ENCODE measurements at regions of chr1 and their contacts with region 1.

Region 1: GRCh38 chr1:101025657-101026504 is at the start of gene DPH5:
- DNase-seq: peak; percentile 88 to 93
- ATAC-seq: peak; percentile 95 to 100 (median 98)
- H3K4me3 ChIP-seq: peak within 1 kb of the TSS; percentile 48 to 85 (median 71)
- H3K27ac ChIP-seq: peak within 1 kb of the TSS; percentile 42 to 93 (median 88)
- H3K4me1 ChIP-seq: peaks cover 2 to 44% (median 23%) of the 10 kb centered on the region in 9 donors
- H3K27me3 ChIP-seq: no peaks in the 10 kb centered on the region
- CTCF ChIP-seq: no peak
- total RNA-seq, gene DPH5: 30.6 to 44.3 (median 36.0) TPM

Region 2: DNA sequence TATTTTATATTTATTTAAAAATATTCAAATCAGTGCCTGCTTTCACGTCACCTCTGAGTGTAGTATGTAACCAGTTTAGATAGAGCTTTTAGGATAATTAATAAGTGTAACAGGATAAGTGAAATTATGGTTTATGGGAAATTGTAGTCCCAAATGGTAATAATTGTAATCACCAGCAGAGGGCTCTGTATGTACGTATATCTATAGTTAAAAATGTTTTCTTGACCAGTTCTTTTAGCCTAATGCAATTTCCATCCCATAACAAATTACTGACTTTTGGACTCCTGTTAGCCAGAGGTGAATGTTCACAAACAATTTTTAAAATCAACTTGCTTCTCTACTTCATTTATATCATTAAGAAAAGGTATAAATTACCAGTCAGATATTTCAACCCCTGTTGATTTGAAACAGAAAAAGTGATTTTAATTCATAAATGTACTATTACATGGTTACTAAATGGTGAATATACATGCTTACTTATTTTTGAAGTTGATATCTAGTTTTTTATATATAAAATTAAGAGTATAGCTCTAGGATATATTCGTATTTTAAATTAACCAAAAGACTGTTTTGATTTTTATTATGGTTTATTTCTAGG is 104.7 kb before region 1 on chr1:
- intact Hi-C with region 1: loop called in 1 of 10 experiments (anchors 10 kb)
- DNase-seq: peak in 1 of 2 donors; percentile 11
- ATAC-seq: no peak
- H3K4me3 ChIP-seq: no peak overlapping the region
- H3K27ac ChIP-seq: no peak overlapping the region
- H3K4me1 ChIP-seq: peaks cover 0 to 3% (median 0%) of the 10 kb centered on the region in 9 donors
- H3K27me3 ChIP-seq: no peaks in the 10 kb centered on the region
- CTCF ChIP-seq: peak; percentile 30 to 82 (median 77)

Region 3: DNA sequence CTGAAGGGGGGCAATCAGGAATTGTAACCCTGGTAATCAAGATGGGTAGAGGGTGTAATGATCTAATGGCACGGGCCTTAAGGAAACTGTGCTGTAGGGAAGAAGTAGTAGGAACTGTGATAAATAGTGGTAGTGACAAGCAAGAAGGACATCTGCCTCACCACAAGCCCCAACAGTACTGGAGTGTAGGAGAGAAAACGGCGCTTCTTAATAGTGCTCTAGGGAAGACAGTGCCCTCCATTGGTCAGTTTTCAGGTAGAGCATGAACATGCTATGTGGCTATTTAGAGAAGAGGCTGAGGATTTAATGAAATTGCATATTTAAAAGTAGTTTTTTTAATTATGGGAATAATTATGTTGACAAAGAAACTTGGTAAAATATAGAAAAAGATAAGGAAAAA is 97.8 kb before region 1 on chr1:
- intact Hi-C with region 1: loop called in 2 of 10 experiments (anchors 5 to 10 kb)
- DNase-seq: no peak
- ATAC-seq: no peak
- H3K4me3 ChIP-seq: no peak overlapping the region
- H3K27ac ChIP-seq: peak overlapping the region in 1 of 10 donors; percentile 66
- H3K4me1 ChIP-seq: peaks cover 0 to 14% (median 0%) of the 10 kb centered on the region in 9 donors
- H3K27me3 ChIP-seq: no peaks in the 10 kb centered on the region
- CTCF ChIP-seq: peak in 3 of 9 donors; percentile 4 to 17 (median 10)

Region 4: DNA sequence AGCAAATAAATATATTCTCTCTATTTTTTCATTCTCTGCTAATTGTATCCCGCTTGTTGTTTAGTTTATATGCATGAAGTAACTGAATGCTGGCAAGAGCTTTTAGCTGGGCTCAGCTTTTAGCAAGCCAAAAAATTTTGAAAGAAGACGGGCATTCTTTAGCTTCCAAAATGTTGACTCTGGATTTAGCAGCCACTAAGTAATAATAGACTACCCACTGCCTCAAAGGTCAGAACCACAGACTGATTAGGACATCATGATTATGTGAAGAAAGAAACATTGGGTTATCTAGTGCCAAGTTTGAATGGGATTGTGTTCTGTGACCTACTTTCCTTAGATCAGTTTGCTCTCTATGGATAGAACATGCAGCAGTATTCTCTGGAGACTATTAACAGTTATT is 80.0 kb after region 1 on chr1:
- intact Hi-C with region 1: loop called in 2 of 10 experiments (anchors 5 to 10 kb)
- DNase-seq: no peak
- ATAC-seq: peak in 6 of 8 donors; percentile 23 to 87 (median 75)
- H3K4me3 ChIP-seq: no peak overlapping the region
- H3K27ac ChIP-seq: no peak overlapping the region
- H3K4me1 ChIP-seq: peaks cover 0 to 33% (median 20%) of the 10 kb centered on the region in 9 donors
- H3K27me3 ChIP-seq: no peaks in the 10 kb centered on the region
- CTCF ChIP-seq: no peak

Region 5: DNA sequence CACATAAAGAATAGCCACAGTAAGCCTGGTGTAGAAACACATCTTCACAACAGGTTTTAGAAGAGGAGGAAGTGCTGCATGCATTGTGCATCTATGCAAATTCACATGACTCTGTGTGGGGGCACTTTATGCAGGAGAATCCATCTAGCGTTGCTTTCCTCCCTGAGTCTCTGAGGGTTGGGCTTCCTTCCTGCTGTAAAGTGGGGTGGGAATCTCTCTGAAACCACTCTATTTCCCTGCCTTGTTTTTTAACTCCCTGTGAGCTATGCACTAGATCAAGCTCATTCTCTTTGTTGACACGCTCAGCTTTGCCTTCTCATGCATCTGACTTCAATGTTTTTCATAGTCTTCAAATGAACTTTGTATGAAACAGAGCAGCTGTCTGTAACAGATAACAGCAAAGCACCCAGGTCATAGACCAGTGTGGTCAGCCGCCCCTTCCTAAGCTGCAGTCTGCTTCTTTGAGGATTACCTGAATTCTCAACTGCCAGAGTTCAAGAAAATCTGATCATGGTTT is 102.4 kb after region 1 on chr1:
- intact Hi-C with region 1: loop called in 1 of 10 experiments (anchors 5 kb)
- DNase-seq: no peak
- ATAC-seq: peak in 6 of 8 donors; percentile 29 to 77 (median 47)
- H3K4me3 ChIP-seq: no peak overlapping the region
- H3K27ac ChIP-seq: peak overlapping the region in 2 of 10 donors; percentile 10 to 49
- H3K4me1 ChIP-seq: peaks cover 0 to 15% (median 8%) of the 10 kb centered on the region in 9 donors
- H3K27me3 ChIP-seq: no peaks in the 10 kb centered on the region
- CTCF ChIP-seq: no peak